ENCODE measurements at regions of chr16 and their contacts with region 1.

Region 1: DNA sequence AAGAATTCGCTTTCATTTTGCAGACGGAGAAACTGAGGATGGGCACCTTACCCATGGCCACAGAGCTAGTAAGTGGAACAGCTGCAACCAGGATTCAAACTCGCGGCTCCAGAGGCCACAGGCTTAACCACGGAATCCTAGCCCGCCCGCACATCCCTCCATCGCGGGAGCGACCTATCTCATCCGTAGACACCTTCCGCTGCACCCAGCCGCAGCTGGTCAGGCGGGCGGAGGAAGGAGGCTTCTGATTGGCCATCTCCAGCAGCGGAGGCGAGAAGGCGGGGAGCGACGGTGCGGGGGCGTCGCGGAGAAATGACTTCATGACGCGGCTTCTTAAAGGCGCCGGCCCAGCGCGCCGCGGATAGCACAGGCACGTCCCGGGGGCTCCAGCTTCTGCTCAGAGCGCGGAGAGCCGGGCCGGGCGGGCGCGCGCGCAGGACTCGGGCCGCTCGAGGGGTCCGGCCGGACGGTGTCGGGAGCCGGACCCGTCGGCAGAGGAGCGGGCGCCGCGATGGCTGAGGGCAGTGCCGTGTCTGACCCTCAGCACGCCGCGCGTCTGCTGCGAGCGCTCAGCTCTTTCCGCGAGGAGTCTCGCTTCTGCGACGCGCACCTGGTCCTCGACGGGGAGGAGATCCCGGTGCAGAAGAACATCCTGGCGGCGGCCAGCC is at the start of gene GAN:
- DNase-seq: peak; percentile 94
- H3K4me3 Mint-ChIP-seq: peak within 1 kb of the TSS; percentile 90
- H3K27ac Mint-ChIP-seq: peak within 1 kb of the TSS; percentile 72
- H3K4me1 Mint-ChIP-seq: peaks cover 38% of the 10 kb centered on the region
- H3K27me3 Mint-ChIP-seq: no peaks in the 10 kb centered on the region
- total RNA-seq, gene GAN: 14.6 and 15.3 TPM in 2 replicates

Region 2: GRCh38 chr16:81035398-81035974 is 279.3 kb before region 1 on chr16 and contains the start of gene ATMIN:
- intact Hi-C with region 1: loop called (anchors 1 kb)
- DNase-seq: peak; percentile 80
- H3K4me3 Mint-ChIP-seq: peak within 1 kb of the TSS; percentile 82
- H3K27ac Mint-ChIP-seq: peak within 1 kb of the TSS; percentile 43
- H3K4me1 Mint-ChIP-seq: peaks cover 18% of the 10 kb centered on the region
- H3K27me3 Mint-ChIP-seq: no peaks in the 10 kb centered on the region
- total RNA-seq, gene ATMIN: 25.8 and 27.1 TPM in 2 replicates

Region 3: DNA sequence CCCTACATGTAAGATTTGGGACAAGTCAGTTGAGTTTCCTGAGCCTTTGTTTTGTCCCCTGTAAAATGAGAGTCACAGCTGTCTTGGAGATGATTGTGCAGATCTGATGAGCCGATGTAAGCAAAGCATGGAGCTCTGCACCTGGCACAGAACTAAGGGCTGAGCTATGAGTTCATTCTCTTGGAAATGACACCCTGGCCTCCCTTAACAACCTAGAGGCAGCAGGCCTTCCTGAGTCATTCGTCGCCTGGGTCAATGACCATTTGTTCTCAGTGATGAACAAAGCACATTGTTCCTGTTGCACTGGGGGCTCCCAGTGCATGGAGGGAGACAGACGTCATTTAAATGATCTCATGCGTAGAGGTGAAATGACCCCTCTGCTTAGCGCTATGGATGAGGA is 155.8 kb before region 1 on chr16:
- intact Hi-C with region 1: no loop called
- DNase-seq: no peak
- H3K4me3 Mint-ChIP-seq: no peak overlapping the region
- H3K27ac Mint-ChIP-seq: no peak overlapping the region
- H3K4me1 Mint-ChIP-seq: no peaks in the 10 kb centered on the region
- H3K27me3 Mint-ChIP-seq: no peaks in the 10 kb centered on the region

Region 4: GRCh38 chr16:81261049-81261648 is 53.6 kb before region 1 on chr16:
- intact Hi-C with region 1: loop called (anchors 2 kb)
- DNase-seq: no peak
- H3K4me3 Mint-ChIP-seq: no peak overlapping the region
- H3K27ac Mint-ChIP-seq: no peak overlapping the region
- H3K4me1 Mint-ChIP-seq: peaks cover 2% of the 10 kb centered on the region
- H3K27me3 Mint-ChIP-seq: peaks cover 3% of the 10 kb centered on the region

Region 5: GRCh38 chr16:81357711-81358260 is 43.0 kb after region 1 on chr16:
- intact Hi-C with region 1: loop called (anchors 2 kb)
- DNase-seq: no peak
- H3K4me3 Mint-ChIP-seq: no peak overlapping the region
- H3K27ac Mint-ChIP-seq: no peak overlapping the region
- H3K4me1 Mint-ChIP-seq: peaks cover 10% of the 10 kb centered on the region
- H3K27me3 Mint-ChIP-seq: no peaks in the 10 kb centered on the region

Region 6: GRCh38 chr16:81632392-81633146 is 317.8 kb after region 1 on chr16:
- intact Hi-C with region 1: loop called (anchors 5 kb)
- DNase-seq: peak; percentile 69
- H3K4me3 Mint-ChIP-seq: peak overlapping the region; percentile 68
- H3K27ac Mint-ChIP-seq: peak overlapping the region; percentile 100
- H3K4me1 Mint-ChIP-seq: peaks cover 72% of the 10 kb centered on the region
- H3K27me3 Mint-ChIP-seq: no peaks in the 10 kb centered on the region

Region 7: GRCh38 chr16:82653550-82654511 is 1339.1 kb after region 1 on chr16:
- intact Hi-C with region 1: loop called (anchors 5 kb)
- DNase-seq: peak; percentile 57
- H3K4me3 Mint-ChIP-seq: peak overlapping the region; percentile 55
- H3K27ac Mint-ChIP-seq: peak overlapping the region; percentile 93
- H3K4me1 Mint-ChIP-seq: peaks cover 82% of the 10 kb centered on the region
- H3K27me3 Mint-ChIP-seq: peaks cover 4% of the 10 kb centered on the region

Measured in activated T-helper 2 cell treated with anti-CD3 and anti-CD28 coated beads, Interferon-gamma antibody, Interleukin-2, Interleukin-4, amounts not matched to agents 10 μg/mL and 5 μg/mL and 100 μg/mL, durations not matched to agents 14 hours and 24 hours and 36 hours (primary cell).